Activated CD4-positive, alpha-beta memory T cell treated with anti-CD3 and anti-CD28 coated beads for 36 hours (primary cell): ENCODE measurements at regions of chr18 and their contacts with region 1.

Region 1: DNA sequence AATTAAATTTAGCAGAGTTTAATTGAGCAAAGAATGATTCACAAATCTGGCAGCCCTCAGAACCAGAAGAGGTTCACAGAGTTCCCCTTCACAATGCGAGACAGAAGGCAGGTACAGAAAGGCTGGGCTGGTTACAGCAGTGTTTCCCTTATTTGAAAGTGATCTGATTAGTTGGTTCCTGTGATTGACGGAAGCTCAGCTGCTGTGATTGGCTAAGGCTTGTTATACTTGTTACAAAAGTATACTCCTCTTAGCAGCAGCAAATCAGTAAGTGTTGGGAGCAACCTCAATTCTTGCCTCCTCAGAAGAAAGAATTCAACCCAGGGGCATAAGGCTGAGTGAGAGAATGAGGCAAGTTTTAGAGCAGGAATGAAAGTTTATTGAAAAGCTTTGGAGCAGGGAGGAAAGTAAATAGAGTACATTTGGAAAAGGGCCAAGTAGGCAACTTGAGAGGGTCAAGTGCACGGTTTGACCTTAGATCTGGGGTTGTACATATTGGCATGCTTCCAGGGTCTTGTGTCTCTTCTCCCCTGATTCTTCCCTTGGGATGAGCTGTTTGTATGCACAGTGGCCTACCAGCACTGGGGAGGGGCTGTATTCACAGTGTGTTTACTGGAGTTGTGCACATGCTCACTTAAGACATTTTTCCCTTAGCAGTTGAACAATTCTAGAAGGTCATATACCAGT is 431.8 kb upstream of the RAB12 start:
- DNase-seq: no peak
- H3K4me3 Mint-ChIP-seq: no peak overlapping the region
- H3K27ac Mint-ChIP-seq: no peak overlapping the region
- H3K4me1 Mint-ChIP-seq: no peaks in the 10 kb centered on the region
- H3K27me3 Mint-ChIP-seq: no peaks in the 10 kb centered on the region

Region 2: DNA sequence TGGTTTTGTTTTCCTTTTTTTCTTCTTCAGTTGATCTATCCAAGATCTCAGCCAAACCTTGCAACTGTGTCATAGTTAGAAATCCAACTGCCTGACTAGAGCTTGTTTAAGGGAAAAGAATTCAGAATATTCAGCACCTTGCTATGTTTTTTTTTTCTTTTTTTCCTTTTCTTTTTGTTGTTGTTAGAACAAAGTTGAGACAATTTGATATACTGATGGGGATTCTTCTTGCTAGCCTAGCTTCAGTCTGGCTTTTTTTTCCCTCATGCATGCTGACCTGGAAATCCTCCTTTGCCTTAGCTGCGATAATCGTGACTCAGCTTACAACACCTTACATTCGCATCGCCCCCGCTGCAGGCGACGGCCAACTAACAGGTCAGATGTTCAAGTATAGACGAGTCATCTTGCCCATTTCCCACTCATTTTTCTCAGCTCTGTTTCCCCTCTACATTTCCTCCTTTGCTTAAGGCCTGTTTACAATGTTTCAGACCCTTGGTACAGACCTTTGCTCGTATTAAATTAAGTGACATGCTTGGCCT is 55.5 kb before region 1 on chr18:
- CTCF ChIA-PET with region 1: no interaction called
- POLR2A ChIA-PET with region 1: no interaction called
- intact Hi-C with region 1: loop called (anchors 10 kb)
- DNase-seq: no peak
- H3K4me3 Mint-ChIP-seq: no peak overlapping the region
- H3K27ac Mint-ChIP-seq: no peak overlapping the region
- H3K4me1 Mint-ChIP-seq: no peaks in the 10 kb centered on the region
- H3K27me3 Mint-ChIP-seq: no peaks in the 10 kb centered on the region

Region 3: GRCh38 chr18:8153887-8154583 is 23.4 kb before region 1 on chr18:
- CTCF ChIA-PET with region 1: no interaction called
- POLR2A ChIA-PET with region 1: no interaction called
- intact Hi-C with region 1: loop called (anchors 2 kb)
- DNase-seq: no peak
- H3K4me3 Mint-ChIP-seq: no peak overlapping the region
- H3K27ac Mint-ChIP-seq: no peak overlapping the region
- H3K4me1 Mint-ChIP-seq: no peaks in the 10 kb centered on the region
- H3K27me3 Mint-ChIP-seq: no peaks in the 10 kb centered on the region